Cardiac septum (tissue), 1 donor: ENCODE measurements at regions of chr10 and their contacts with region 1.

Region 1: DNA sequence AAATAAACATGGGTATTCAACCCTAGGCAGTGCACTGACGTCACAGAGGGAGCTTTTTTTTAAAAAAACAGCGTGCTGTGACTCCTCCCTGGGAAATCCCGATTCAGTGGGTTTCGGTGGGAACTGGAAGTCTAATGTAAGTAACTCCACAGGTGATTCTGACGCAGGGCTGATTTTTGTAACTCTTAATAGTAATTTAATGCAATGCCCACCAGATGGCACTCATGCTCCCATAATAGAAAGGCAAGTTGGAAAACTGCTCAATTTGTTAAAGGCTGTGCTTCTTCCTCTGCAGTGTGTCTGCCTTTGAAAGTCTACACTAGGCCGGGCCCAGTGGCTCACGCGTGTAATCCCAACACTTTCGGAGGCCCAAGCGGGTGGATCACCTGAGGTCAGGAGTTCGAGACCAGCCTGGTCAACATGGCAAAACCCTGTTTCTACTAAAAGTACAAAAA is 10.9 kb upstream of the RSU1 start:
- DNase-seq: no peak

Region 2: GRCh38 chr10:16423599-16423998 is 404.5 kb before region 1 on chr10:
- intact Hi-C with region 1: no loop called
- DNase-seq: no peak

Region 3: DNA sequence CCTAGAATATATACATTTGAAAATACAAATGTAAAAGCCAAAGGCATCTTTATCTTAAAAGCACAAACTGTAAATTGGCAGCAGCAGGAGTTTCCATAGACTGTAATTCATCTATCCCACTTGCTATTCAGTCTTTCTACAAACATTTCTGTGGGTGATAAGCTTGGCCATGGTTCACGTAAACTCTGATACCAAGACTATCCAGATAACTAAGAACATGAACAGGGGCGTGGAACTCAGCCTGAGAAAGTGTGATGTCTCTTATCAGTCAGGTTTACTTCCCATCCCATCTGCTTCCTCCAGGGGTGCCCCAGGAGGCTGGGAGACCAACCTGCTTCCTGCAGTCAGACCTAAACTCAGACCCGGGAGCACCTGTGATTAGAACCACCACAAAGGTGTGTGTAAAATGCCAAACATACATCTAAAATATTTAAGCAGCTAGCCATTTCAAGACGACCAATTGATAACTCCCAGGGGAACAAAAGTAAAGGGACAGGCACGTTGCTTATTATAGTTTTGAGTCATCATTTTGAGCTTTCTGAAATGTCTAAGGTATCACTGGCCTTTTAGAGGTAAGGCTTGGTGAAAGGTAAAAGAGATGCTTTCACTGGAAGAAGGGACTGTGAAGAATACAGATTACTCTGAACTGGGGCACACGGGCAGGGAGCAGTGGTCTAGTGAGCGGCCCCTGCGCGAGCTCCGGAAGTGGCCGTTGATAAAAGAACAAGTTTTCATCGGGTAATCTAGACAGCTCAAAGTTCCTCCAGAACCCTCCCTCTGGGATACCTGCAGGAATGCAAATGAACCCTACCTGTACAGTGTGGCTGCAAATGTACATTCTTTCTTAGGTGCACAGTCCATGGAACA is 62.4 kb before region 1 on chr10:
- intact Hi-C with region 1: no loop called
- DNase-seq: no peak

Region 4: DNA sequence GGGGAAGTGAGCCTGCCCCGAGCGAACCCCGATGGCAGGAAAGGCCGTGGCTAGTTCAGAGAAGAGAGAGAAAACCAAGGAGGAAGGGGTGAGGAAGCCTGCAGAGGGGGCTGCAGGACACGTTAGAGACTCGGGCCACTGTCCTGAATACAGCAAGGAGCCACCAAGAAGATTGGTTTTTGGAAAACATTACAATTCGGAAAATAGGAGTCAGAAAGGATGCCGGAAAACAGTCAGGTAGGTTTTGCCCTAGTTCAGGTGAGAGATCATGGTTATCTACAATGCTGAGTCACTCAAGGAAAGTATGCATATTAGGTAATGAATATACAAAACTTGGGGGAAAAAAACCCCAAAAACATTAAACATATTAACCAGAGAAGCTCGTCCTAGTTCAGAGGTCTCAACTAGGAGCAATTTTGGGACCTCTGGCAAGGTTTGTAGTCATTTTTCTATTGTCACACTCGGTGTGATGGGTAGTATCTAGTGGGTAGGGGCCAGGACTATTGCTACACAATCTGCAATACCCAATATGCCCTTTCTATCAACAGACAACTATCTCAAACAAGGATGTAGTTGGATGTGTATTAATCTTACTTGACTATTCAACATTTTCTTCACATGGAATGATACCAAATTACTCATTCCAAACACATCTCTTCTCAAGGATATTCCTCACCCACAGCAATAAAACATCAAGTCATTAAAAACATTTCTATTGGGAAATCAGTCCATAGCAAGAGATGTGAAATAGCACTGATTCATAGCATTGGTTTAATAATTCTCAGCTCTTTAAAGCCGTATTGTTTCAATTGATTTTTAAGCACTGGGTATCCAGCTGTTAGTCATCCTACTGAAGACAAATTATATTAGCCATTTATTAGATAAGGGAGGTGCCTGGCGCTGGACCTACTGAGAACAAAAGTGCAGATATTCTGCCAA is 63.5 kb after region 1 on chr10:
- intact Hi-C with region 1: no loop called
- DNase-seq: no peak

Region 5: GRCh38 chr10:17257466-17258321 is 429.6 kb after region 1 on chr10:
- intact Hi-C with region 1: loop called (anchors 5 kb)
- DNase-seq: no peak